A673 (cell line): ENCODE measurements at regions of chr10 and their contacts with region 1.

Region 1: DNA sequence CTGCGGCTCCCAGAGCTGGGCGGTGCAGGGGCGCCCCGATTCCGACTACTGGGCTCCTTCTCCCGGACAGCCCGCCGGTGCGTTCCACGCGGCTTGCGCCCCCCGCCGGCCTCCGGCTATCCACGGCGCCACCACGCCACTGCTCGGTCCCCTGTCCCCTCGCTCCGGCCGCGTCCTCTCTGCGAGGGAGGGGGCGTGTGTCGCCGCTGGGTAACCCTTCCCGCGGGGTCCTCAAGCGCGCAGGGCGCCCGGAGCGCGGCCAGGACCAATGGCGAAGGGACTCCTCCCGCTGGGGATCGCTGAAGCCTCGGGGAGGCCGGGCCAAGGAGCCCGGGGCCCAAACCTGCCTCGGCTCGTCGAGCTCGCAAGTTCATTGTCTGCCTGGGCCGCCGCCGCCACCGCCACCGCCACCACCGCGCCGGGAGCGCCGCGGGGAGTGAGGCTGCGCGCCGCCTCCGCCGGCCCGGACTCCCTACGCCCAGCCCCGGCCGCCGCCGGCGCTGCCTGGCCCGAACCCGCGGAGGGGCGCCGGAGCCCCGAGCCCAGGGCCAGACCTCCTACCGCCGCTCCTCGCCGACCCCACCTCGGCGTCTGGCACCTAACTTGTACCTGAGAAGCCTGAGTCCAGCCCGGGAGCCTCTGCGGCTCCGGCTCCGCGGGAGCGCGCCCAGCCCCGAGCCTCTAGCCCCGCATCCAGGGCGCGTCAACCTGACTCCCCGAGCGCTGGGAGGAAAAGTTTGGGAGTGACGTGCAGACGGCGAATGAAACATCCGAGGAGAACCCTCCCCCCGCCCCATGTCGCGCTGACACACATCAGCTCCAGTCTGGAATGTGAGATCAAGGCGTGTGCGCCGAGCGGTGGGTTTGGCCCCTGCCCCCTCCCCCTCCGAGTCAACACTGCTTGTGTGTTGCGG is at the start of gene CHST15:
- DNase-seq: peak; percentile 45
- H3K4me3 ChIP-seq: peak within 1 kb of the TSS; percentile 46
- H3K27ac ChIP-seq: no peak within 1 kb of the TSS
- H3K4me1 ChIP-seq: peaks cover 6% of the 10 kb centered on the region
- H3K27me3 ChIP-seq: peaks cover 69% of the 10 kb centered on the region
- CTCF ChIP-seq: 0 out of 2 replicates have a peak, but pooled peaks have one; percentile 16
- total RNA-seq, gene CHST15: 1.7 and 2.7 TPM in 2 replicates

Region 2: GRCh38 chr10:125549653-125550052 is 1456.5 kb after region 1 on chr10:
- CTCF ChIA-PET with region 1: interaction called, 10 read pairs
- POLR2A ChIA-PET with region 1: no interaction called
- intact Hi-C with region 1: no loop called
- DNase-seq: no peak
- H3K4me3 ChIP-seq: no peak overlapping the region
- H3K27ac ChIP-seq: no peak overlapping the region
- H3K4me1 ChIP-seq: peaks cover 9% of the 10 kb centered on the region
- H3K27me3 ChIP-seq: peaks cover 6% of the 10 kb centered on the region
- CTCF ChIP-seq: no peak